H1 (cell line): ENCODE measurements at regions of chr11 and their contacts with region 1.

Region 1: DNA sequence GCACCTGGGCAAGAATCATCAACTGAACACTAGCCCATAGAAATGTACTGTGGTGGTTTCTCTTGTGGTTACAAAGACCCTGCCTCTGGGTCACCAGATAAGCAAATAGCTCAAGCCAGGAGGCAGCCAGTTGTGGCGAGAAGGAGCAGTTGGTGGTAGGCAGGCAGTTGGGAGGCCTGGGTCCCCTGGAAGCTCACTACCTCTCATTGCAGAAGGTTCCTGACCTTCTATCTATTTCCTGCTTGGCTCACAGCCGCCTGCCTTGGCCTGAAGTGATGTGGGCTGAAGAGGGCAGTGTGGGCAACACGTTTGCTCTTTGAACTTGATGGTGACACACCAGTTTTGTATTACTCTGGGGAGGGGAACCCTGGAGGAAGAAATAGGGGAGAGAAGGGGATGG is 34.7 kb downstream of the NECTIN1 start:
- DNase-seq: no peak
- H3K4me3 ChIP-seq: no peak overlapping the region
- H3K27ac ChIP-seq: no peak overlapping the region
- H3K4me1 ChIP-seq: peaks cover 10 to 68% (median 46%) of the 10 kb centered on the region in 4 experiments
- H3K27me3 ChIP-seq: no peaks in the 10 kb centered on the region
- CTCF ChIP-seq: peak in 2 of 3 experiments; percentile 6 to 30; a peak in 2 of 4 replicates
- EP300 ChIP-seq: no peak
- POLR2A ChIP-seq: no peak
- RAD21 ChIP-seq: peak in 1 of 2 experiments; percentile 25; a peak in 2 of 4 replicates

Region 2: DNA sequence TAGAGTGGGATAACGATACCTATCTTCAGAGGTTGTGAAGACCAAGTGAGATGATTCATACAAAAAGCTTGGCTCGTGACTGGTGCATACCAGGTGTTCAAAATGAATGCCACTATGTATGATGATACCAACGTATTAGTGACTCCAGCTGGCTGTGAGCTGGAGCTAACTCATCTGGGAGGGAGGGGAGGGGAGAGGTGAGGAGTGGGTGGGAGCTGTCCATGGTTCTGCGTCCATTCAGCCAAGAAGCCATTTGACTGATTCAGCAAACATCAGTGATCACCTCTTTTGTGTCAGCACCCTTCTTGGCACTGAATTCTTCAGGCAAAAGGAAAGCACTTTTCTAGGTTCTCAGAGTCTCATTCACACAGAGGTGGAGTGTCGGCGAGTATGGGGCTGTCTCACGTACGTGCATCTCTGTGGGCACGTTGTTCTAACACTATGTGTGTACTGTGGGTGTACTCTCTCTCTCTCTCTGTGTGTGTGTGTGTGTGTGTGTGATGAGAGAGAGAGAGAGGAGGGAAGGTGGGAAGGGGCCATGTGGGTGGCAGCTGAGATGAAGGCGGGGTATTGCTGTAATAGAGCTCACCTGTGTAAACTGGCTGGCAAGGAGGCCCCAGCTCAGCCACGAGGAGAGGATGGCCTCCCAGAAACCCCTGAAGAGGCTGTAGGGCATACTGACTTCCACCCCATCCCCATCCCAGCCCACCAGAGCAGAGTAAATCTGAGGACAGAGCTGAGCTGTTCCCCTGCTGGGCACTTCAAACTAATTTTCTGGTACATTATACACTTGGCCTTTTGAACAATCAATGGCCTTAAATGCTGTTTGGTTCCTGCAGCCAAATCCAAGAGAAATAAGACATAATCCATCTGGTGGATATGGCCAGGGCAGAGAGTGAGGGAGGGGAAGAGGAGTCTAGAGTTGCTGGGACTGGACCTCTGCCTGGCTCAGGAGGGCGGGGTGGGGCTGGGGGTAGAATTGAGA is 175.3 kb before region 1 on chr11:
- CTCF ChIA-PET with region 1: no interaction called
- POLR2A ChIA-PET with region 1: no interaction called
- DNase-seq: peak; percentile 25 to 65
- H3K4me3 ChIP-seq: no peak overlapping the region
- H3K27ac ChIP-seq: no peak overlapping the region
- H3K4me1 ChIP-seq: no peaks in the 10 kb centered on the region; a peak in 1 of 7 replicates
- H3K27me3 ChIP-seq: no peaks in the 10 kb centered on the region
- CTCF ChIP-seq: no peak
- EP300 ChIP-seq: no peak
- POLR2A ChIP-seq: no peak
- RAD21 ChIP-seq: 0 out of 4 replicates have a peak, but pooled peaks of 1 of the 2 experiments have one; percentile 0

Region 3: DNA sequence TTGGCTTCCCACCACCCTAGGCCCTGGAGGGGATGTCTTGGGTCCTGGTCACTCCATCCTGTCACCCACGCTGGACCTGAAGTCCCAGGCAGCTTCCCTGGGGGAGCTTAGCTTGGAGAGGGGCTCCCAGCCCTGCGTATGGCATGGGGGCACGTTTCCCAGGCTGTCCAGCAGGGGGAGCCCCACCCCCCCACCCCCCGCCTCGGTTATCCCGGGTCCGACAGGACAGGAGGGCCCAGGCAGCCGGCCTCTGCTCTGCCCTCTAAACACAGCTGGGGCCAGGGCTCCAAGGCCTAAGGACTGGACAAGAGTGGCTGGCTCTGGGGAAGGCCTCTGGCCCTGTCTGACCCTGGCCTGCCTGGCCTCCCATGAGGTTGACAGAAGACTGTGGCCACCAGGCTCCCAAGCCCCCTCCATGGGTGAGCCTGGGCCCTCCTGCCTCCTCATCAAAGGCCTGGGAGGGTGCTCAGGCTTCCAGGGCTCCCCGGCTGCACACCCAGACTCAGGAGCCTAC is 70.2 kb before region 1 on chr11:
- CTCF ChIA-PET with region 1: no interaction called
- POLR2A ChIA-PET with region 1: no interaction called
- DNase-seq: no peak
- H3K4me3 ChIP-seq: no peak overlapping the region
- H3K27ac ChIP-seq: no peak overlapping the region
- H3K4me1 ChIP-seq: peaks cover 5 to 30% (median 17%) of the 10 kb centered on the region in 4 experiments
- H3K27me3 ChIP-seq: no peaks in the 10 kb centered on the region; a peak in 2 of 7 replicates
- CTCF ChIP-seq: peak; percentile 50 to 77 (median 56); a peak in 3 of 4 replicates
- EP300 ChIP-seq: no peak
- POLR2A ChIP-seq: no peak
- RAD21 ChIP-seq: peak in 1 of 2 experiments; percentile 52; a peak in 2 of 4 replicates

Region 4: GRCh38 chr11:119721129-119722120 is 27.1 kb after region 1 on chr11:
- CTCF ChIA-PET with region 1: interaction called, 171 read pairs
- POLR2A ChIA-PET with region 1: no interaction called
- DNase-seq: peak in 1 of 2 experiments; percentile 77
- H3K4me3 ChIP-seq: no peak overlapping the region
- H3K27ac ChIP-seq: no peak overlapping the region
- H3K4me1 ChIP-seq: peaks cover 22 to 64% (median 41%) of the 10 kb centered on the region in 4 experiments
- H3K27me3 ChIP-seq: no peaks in the 10 kb centered on the region
- CTCF ChIP-seq: peak; percentile 64 to 87 (median 82)
- EP300 ChIP-seq: no peak
- POLR2A ChIP-seq: no peak
- RAD21 ChIP-seq: peak; percentile 45 to 57

Region 5: GRCh38 chr11:119816660-119817059 is 122.3 kb after region 1 on chr11:
- CTCF ChIA-PET with region 1: no interaction called
- POLR2A ChIA-PET with region 1: no interaction called
- DNase-seq: no peak
- H3K4me3 ChIP-seq: no peak overlapping the region
- H3K27ac ChIP-seq: no peak overlapping the region
- H3K4me1 ChIP-seq: peaks cover 0 to 11% (median 6%) of the 10 kb centered on the region in 4 experiments; a peak in 3 of 7 replicates
- H3K27me3 ChIP-seq: no peaks in the 10 kb centered on the region
- CTCF ChIP-seq: no peak
- EP300 ChIP-seq: no peak
- POLR2A ChIP-seq: no peak
- RAD21 ChIP-seq: no peak